ENCODE measurements at regions of chr14 and their contacts with region 1.

Region 1: GRCh38 chr14:99271951-99272631 is at the start of gene BCL11B:
- DNase-seq: peak; percentile 74 to 95 (median 87)
- ATAC-seq: peak; percentile 68 to 81 (median 73)
- H3K4me3 ChIP-seq: peak within 1 kb of the TSS; percentile 90 to 97
- H3K4me3 Mint-ChIP-seq: peak within 1 kb of the TSS; percentile 95 to 98 (median 96)
- H3K27ac ChIP-seq: peak within 1 kb of the TSS; percentile 74
- H3K27ac Mint-ChIP-seq: peak within 1 kb of the TSS; percentile 91 to 99
- H3K4me1 ChIP-seq: peaks cover 9 to 34% of the 10 kb centered on the region in 2 experiments
- H3K4me1 Mint-ChIP-seq: peaks cover 30 to 45% (median 38%) of the 10 kb centered on the region in 3 donors
- H3K27me3 ChIP-seq: no peaks in the 10 kb centered on the region
- H3K27me3 Mint-ChIP-seq: no peaks in the 10 kb centered on the region
- total RNA-seq, gene BCL11B: 181 to 240 (median 196) TPM

Region 2: DNA sequence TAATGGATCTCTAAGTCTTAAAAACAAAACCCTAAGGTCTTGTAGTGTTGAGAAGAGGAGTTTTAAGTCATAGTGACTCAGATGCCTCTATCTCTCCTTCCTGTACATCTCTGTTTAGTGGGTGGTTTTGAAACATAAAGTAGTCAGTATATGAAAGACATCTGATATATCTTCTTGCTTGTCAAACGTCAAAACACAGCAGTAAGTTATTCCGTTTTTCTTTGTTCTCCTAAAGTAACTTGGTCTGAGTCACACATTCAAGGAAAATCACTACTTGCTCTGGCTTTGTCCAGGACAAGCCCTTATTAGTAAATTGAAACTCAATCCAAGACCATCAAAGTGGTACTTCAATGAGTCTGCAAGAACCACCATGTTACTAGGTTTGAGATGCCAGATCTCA is 1172.6 kb before region 1 on chr14:
- CTCF ChIA-PET with region 1: interaction called in 1 of 2 experiments, 12 read pairs
- POLR2A ChIA-PET with region 1: interaction called in 1 of 2 experiments, 5 read pairs
- DNase-seq: no peak
- ATAC-seq: peak in 2 of 4 experiments; percentile 67 to 74
- H3K4me3 ChIP-seq: no peak overlapping the region
- H3K4me3 Mint-ChIP-seq: peak overlapping the region in 1 of 3 donors; percentile 14
- H3K27ac ChIP-seq: no peak overlapping the region
- H3K27ac Mint-ChIP-seq: peak overlapping the region; percentile 34 to 72
- H3K4me1 ChIP-seq: peaks cover 4 to 7% of the 10 kb centered on the region in 2 experiments
- H3K4me1 Mint-ChIP-seq: peaks cover 27 to 46% (median 38%) of the 10 kb centered on the region in 3 donors
- H3K27me3 ChIP-seq: no peaks in the 10 kb centered on the region
- H3K27me3 Mint-ChIP-seq: no peaks in the 10 kb centered on the region

Region 3: GRCh38 chr14:99064226-99064954 is 207.7 kb before region 1 on chr14:
- CTCF ChIA-PET with region 1: no interaction called
- POLR2A ChIA-PET with region 1: no interaction called
- DNase-seq: no peak
- ATAC-seq: no peak
- H3K4me3 ChIP-seq: no peak overlapping the region
- H3K4me3 Mint-ChIP-seq: no peak overlapping the region
- H3K27ac ChIP-seq: no peak overlapping the region
- H3K27ac Mint-ChIP-seq: no peak overlapping the region
- H3K4me1 ChIP-seq: no peaks in the 10 kb centered on the region
- H3K4me1 Mint-ChIP-seq: peaks cover 0 to 16% (median 8%) of the 10 kb centered on the region in 3 donors
- H3K27me3 ChIP-seq: no peaks in the 10 kb centered on the region
- H3K27me3 Mint-ChIP-seq: no peaks in the 10 kb centered on the region

Measured in T-cell (primary cell).